Activated CD4-positive, alpha-beta T cell treated with anti-CD3 and anti-CD28 coated beads, Interleukin-2, amount 10 ng/mL, durations not matched to agents 24 days and 14 days (primary cell): ENCODE measurements at regions of chr16 and their contacts with region 1.

Region 1: DNA sequence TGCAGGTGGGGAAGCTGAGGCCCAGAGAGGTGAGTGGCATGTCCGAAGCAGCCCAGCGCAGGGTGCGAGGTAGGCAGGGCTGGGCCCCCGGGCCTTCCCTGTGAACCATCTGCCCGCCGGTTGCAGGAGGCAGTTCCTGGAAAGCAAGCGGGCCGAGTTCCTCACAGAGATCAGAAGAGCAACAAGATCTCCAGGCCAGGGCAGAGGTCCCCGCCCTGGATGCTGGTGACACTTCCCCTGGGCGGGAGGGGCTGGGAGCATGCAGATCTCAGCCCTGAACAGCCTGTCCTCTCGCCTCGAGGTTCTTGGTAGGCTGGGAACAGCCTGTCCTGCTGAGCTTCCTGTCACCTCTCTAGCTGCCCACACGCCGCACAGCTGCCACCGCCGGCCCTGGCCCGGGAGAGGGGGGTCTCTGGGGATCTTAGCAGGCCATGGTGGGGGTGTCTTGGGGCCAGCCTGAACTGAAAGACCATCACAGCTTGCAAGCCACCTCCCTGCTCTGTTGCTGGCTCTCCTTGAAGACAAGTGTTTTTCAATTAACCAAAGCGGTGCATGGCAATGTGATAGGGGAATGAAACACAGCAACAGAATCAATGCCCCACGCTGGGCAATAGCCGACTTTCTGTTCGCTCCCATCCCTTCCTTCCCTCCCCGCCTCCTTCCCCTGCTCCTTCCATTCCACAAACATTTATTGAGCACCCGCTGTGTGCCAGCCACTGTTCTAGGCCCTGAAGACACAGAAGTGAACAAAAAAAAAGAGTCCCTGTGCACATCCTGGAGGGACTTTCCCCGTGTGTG is 31.7 kb downstream of the SOCS1 start:
- DNase-seq: peak; percentile 92
- H3K4me3 Mint-ChIP-seq: peak overlapping the region; percentile 86
- H3K27ac Mint-ChIP-seq: peak overlapping the region; percentile 100
- H3K4me1 Mint-ChIP-seq: peaks cover 56% of the 10 kb centered on the region
- H3K27me3 Mint-ChIP-seq: no peaks in the 10 kb centered on the region

Region 2: DNA sequence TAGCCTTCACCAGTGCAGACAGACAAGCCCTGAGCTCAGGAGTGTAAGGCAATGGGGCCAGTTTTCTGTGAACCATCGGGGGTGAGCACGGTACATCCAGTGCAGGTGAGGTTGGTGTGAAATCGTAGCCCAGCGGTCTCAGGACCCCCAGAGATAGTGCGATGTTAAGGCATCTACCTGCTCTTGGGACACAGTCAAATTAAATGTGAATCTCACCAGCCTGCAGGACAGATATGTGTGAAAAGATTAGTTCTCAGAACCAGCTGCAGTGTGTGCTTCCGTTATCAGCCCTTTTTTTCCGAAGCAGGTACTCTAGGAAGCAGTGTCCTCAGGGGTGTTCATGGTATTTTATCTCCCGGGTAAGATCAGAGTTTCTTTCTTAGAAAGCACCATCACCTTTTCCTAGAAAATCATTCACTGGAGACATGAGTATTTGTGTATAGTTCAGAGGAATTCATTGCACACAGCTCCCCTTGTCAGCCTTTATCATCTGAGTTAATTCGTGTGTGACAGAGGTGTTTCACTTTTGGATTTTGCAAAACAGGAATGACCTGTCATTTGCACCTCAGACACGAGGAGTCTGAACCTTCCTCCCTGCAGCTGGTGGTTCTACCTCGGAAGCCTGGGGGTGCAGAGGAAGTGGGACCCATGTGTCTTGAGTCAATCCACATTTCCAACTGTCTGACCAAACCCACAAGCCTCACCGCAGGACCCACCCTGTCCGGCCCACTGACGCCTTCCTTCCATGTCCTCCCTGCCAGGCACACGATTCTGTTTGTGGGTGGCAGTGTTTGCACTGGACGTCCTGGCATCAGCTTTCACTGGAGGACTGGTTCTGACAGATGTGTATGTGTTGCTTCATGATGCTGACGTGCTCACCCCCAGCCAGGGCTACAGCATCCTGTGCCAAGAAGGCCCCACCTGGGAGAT is 172.2 kb before region 1 on chr16:
- intact Hi-C with region 1: loop called (anchors 1 kb)
- DNase-seq: peak; percentile 93
- H3K4me3 Mint-ChIP-seq: peak overlapping the region; percentile 46
- H3K27ac Mint-ChIP-seq: peak overlapping the region; percentile 89
- H3K4me1 Mint-ChIP-seq: peaks cover 77% of the 10 kb centered on the region
- H3K27me3 Mint-ChIP-seq: no peaks in the 10 kb centered on the region

Region 3: DNA sequence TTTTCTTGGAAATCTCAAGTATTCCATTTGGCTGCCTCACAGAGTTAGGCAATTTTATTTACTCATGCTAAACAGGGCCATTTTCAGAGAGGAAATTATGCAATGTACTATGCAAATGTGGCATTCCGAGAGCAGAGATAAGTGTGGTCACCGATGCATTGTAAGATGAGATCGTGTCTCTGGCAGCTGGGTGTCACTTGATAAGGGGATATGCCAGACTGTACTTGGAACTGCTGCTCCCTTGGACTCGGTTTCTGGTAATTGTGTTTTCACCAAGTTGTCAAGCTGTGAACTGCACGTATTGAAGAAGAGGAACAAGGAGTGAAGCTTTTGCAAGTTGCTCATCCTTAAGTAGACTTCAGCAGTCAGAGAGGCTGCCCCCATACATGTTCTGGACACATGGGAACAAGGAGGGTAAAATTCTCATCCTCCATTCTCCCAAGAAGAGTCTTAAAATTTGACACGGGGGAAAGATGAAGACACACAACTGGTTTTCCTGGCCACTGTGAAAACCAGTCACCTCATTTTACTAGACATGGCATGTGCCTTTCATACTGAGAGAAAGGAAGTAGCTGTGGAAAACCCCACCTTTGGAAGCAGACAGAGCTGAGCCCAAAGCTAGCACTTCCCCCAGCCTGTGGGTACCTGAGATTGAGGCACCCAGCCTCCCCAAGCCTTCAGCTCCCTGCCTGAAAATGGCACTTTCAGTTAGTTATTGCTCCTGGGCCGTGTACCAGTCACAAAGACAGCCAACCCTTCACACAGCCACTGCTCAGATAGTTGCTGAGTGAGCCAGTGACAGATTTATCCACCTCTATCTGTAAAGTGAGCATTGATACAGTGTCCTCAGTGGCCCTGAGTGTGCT is 119.0 kb before region 1 on chr16:
- intact Hi-C with region 1: loop called (anchors 1 kb)
- DNase-seq: peak; percentile 84
- H3K4me3 Mint-ChIP-seq: peak overlapping the region; percentile 73
- H3K27ac Mint-ChIP-seq: peak overlapping the region; percentile 92
- H3K4me1 Mint-ChIP-seq: peaks cover 65% of the 10 kb centered on the region
- H3K27me3 Mint-ChIP-seq: no peaks in the 10 kb centered on the region

Region 4: DNA sequence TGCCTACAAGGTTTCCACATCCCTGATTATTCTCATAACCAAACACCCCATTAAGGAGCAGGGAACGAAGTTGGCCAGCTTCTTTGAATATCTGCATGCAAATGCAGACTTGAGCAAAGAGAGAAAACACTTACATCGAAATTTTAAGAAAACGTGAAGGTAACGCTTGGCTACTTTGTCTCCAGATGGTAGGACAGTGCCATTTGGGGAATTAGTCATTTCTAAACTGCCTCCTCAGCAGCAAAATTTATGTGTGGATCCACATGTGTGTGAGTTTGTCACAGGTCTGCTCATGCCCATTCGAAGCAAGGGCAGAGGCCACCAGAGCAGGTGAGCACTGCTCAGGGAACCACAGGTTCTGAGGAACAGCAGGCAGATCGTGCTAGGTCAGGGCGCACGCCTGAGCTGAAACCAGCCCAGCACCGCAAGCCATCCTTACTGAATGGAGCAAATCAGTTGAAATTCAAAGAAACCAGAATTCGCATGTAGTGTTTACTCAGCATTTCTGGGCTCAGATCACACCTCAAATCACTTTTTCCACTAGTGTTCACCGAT is 48.4 kb before region 1 on chr16:
- intact Hi-C with region 1: loop called (anchors 2 kb)
- DNase-seq: peak; percentile 71
- H3K4me3 Mint-ChIP-seq: peak overlapping the region; percentile 39
- H3K27ac Mint-ChIP-seq: peak overlapping the region; percentile 85
- H3K4me1 Mint-ChIP-seq: peaks cover 48% of the 10 kb centered on the region
- H3K27me3 Mint-ChIP-seq: no peaks in the 10 kb centered on the region